ENCODE measurements at regions of chr14 and their contacts with region 1.

Region 1: GRCh38 chr14:50860478-50861086 is 11.3 kb upstream of the ABHD12B start:
- DNase-seq: peak; percentile 82 to 94
- ATAC-seq: peak; percentile 83 to 87 (median 85)
- H3K4me3 ChIP-seq: peak overlapping the region; percentile 71
- H3K4me3 Mint-ChIP-seq: peak overlapping the region; percentile 93
- H3K27ac ChIP-seq: no peak overlapping the region
- H3K27ac Mint-ChIP-seq: peak overlapping the region; percentile 36 to 83
- H3K4me1 ChIP-seq: peaks cover 12% of the 10 kb centered on the region
- H3K4me1 Mint-ChIP-seq: peaks cover 0 to 9% of the 10 kb centered on the region in 2 donors
- H3K27me3 ChIP-seq: no peaks in the 10 kb centered on the region
- H3K27me3 Mint-ChIP-seq: peaks cover 6 to 17% of the 10 kb centered on the region in 2 donors
- CTCF ChIP-seq: peak; percentile 82

Region 2: DNA sequence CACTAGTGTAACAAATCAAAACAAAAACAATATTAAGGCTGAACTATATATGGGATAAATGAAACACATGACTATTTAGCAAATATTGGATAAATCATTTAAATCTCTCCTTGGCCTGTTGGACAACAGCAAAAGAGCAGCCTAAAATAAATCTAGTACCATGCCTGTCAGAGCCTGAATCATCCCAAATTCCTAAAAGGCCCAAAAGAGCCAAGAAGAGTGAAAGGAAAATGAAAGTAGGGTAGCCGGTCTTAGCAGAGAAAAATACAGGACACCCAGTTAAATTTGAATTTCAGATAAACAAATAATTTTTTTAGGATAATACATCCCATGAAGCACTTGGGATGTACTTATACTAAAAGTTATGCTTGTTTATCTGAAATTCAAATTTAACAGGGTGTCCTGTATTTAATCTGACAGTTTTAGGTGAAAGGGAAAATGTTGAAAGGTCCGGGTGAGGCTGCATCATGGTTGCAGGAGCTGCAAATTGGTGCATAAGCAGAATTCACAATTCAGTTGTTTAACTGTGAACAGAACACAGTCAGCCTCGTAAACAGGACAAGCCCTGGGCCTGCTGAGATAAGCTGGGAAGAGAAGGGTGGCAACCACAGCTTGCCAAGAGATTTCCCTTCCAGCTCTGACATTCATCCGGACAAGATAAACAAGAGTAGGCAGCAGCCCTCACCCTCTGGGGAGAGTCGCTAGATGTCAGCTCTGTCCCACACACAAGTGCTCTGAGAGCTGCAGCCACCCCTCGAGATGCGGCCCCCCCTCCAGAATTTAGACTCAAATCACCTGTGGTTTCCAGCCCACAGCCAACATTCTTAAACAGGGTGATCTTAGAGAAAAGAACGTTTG is 518.1 kb before region 1 on chr14:
- intact Hi-C with region 1: loop called (anchors 1 kb)
- DNase-seq: peak in 1 of 2 donors; percentile 68
- ATAC-seq: peak; percentile 86 to 99 (median 93)
- H3K4me3 ChIP-seq: no peak overlapping the region
- H3K4me3 Mint-ChIP-seq: peak overlapping the region; percentile 40
- H3K27ac ChIP-seq: no peak overlapping the region
- H3K27ac Mint-ChIP-seq: peak overlapping the region in 1 of 2 donors; percentile 70
- H3K4me1 ChIP-seq: peaks cover 7% of the 10 kb centered on the region
- H3K4me1 Mint-ChIP-seq: peaks cover 16 to 27% of the 10 kb centered on the region in 2 donors
- H3K27me3 ChIP-seq: no peaks in the 10 kb centered on the region
- H3K27me3 Mint-ChIP-seq: no peaks in the 10 kb centered on the region
- CTCF ChIP-seq: peak; percentile 51

Region 3: DNA sequence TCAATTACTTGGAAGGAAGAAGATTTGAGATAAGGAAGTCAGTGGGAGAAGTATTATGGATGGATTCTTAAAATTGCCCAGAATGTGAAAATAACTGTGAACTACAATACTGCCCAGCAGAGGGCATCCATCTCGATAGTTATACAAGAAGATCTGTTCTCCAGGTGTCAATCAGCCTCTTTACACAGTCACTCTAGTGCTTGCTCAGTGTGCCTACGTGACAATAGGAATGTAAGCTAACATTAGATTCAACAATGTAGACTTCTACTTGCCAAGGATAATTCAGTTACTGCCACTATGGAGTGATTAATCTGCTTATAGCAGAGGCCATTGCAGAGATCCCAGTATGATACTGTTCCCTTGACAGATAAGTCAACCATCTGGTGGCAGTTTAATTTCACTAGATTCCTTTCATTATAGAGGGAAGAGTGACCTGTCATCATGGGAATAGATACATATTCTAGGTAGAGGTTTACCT is 317.6 kb before region 1 on chr14:
- intact Hi-C with region 1: loop called (anchors 1 kb)
- DNase-seq: peak in 1 of 2 donors; percentile 72
- ATAC-seq: peak; percentile 58 to 89 (median 78)
- H3K4me3 ChIP-seq: no peak overlapping the region
- H3K4me3 Mint-ChIP-seq: no peak overlapping the region
- H3K27ac ChIP-seq: no peak overlapping the region
- H3K27ac Mint-ChIP-seq: no peak overlapping the region
- H3K4me1 ChIP-seq: peaks cover 3% of the 10 kb centered on the region
- H3K4me1 Mint-ChIP-seq: peaks cover 8 to 11% of the 10 kb centered on the region in 2 donors
- H3K27me3 ChIP-seq: no peaks in the 10 kb centered on the region
- H3K27me3 Mint-ChIP-seq: peaks cover 0 to 9% of the 10 kb centered on the region in 2 donors
- CTCF ChIP-seq: peak; percentile 70

Region 4: GRCh38 chr14:50599700-50600444 is 260.7 kb before region 1 on chr14:
- intact Hi-C with region 1: loop called (anchors 10 kb)
- DNase-seq: peak in 1 of 2 donors; percentile 53
- ATAC-seq: no peak
- H3K4me3 ChIP-seq: no peak overlapping the region
- H3K4me3 Mint-ChIP-seq: no peak overlapping the region
- H3K27ac ChIP-seq: no peak overlapping the region
- H3K27ac Mint-ChIP-seq: no peak overlapping the region
- H3K4me1 ChIP-seq: no peaks in the 10 kb centered on the region
- H3K4me1 Mint-ChIP-seq: no peaks in the 10 kb centered on the region
- H3K27me3 ChIP-seq: no peaks in the 10 kb centered on the region
- H3K27me3 Mint-ChIP-seq: no peaks in the 10 kb centered on the region
- CTCF ChIP-seq: peak; percentile 10

Region 5: DNA sequence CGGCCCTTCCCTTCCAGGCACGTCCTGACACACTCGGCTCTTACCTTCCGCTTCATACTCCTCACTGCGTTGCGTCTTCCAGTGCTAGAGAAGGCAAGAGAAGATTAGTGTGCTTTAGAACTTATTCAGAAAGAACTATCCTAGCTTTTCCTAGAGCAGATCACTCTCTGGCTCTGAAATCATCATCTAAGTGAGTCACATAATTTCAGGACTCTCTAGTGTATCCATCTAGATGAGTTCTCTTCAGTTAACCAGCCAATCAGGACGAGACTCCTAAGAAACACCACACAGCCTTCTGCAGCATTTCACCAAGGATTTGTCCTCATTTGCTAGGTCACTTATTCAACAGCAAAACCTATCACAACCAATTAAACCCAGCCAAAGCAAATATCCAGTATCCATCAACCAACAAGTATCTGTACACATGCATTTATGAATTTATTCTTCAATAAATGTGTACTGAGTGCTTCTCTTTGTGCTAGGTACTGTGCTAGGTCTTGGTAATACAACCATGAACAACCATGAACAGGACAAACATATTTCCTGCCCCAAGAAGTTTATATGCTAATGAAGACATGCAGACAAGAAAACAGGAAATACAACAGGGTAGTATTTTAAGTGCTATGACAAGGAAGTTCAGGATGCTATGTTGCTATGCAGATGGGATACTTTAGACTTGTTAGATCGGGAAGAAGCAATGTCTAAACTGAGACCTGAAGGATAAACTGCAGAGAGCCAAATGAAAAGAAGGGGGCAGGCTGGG is 81.7 kb before region 1 on chr14:
- intact Hi-C with region 1: loop called (anchors 2 kb)
- DNase-seq: no peak
- ATAC-seq: no peak
- H3K4me3 ChIP-seq: no peak overlapping the region
- H3K4me3 Mint-ChIP-seq: peak overlapping the region; percentile 38
- H3K27ac ChIP-seq: no peak overlapping the region
- H3K27ac Mint-ChIP-seq: peak overlapping the region; percentile 3 to 37
- H3K4me1 ChIP-seq: peaks cover 19% of the 10 kb centered on the region
- H3K4me1 Mint-ChIP-seq: peaks cover 28 to 38% of the 10 kb centered on the region in 2 donors
- H3K27me3 ChIP-seq: no peaks in the 10 kb centered on the region
- H3K27me3 Mint-ChIP-seq: no peaks in the 10 kb centered on the region
- CTCF ChIP-seq: no peak